GM18951 (cell line): ENCODE measurements at regions of chr7 and their contacts with region 1.

Region 1: DNA sequence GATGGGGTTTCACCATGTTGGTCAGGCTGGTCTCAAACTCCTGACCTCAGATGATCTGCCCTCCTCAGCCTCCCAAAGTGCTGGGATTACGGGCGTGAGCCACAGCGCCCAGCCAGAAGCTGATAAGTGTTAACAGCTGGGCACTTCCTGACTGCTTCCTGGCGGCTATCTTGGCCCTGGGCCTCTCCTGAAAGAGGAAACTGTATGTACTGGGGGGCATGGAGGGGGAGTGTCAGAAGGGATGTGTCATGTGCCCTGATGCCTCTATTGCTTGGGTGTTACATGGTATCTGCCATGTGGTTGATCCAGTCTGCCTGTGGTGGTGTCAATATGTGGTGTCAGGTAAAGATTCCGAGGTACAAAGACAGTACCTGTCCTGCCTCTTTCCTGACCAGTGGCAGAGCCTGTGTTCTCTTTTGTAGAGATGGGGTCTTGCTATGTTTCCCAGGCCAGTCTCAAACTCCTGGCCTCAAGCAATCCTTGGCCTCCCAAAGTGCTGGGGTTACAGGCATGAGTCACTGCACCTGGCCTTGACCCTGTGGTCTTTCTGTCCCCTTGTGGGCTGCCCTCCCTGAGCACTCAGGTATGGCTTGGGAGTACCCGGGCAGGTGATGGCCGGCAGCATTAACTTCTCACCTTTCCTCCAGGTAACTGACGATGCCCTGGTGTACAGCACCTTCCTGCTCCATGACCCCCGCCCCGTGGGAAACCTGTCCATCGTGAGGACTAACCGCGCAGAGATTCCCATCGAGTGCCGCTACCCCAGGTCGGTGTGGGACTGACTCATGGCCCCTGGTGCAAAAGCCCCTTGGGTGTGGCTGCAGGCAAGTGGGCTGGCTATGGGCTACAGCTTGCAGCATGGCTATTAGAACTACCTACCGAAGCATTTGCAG is 4.4 kb downstream of the ZP3 start:
- POLR2A ChIP-seq: no peak

Region 2: DNA sequence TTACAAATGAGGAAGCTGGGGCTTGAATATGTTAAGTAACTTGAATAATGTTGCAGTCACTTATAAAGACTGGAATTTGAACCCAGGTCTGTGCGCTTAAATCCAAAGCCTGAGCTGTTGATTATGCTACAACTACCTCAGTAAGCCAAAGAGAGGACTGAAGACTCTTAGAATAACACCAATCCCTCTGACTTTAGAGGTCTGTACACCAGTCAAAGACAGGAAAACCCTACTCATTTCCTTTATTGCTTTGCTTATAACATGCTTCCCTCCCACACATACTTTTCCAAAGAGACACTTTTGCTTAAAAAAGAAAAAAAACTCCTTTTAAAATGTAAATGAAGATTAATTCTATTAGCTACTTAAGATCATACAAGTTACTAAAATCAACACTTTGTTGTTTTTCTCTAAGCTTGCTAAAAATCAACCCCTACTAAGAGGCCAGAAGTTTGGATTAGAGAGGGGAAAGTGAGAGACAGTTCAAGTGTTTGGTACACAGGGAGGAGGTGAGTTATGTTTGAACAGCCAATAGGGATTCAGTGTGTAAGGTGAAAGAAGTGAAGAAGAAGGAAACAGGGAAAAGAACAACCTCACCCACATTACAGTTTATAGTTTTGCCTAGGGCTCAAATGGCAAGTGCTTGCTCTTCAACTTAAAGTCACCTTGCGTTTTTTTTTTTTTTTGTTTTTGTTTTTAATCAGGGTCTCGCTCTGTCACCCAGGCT is 306.4 kb before region 1 on chr7:
- in situ Hi-C with region 1: no loop called
- POLR2A ChIP-seq: no peak

Region 3: GRCh38 chr7:76515999-76516443 is 86.9 kb after region 1 on chr7:
- in situ Hi-C with region 1: loop called (anchors 25 kb)
- POLR2A ChIP-seq: no peak